H1 (cell line): ENCODE measurements at regions of chr7 and their contacts with region 1.

Region 1: DNA sequence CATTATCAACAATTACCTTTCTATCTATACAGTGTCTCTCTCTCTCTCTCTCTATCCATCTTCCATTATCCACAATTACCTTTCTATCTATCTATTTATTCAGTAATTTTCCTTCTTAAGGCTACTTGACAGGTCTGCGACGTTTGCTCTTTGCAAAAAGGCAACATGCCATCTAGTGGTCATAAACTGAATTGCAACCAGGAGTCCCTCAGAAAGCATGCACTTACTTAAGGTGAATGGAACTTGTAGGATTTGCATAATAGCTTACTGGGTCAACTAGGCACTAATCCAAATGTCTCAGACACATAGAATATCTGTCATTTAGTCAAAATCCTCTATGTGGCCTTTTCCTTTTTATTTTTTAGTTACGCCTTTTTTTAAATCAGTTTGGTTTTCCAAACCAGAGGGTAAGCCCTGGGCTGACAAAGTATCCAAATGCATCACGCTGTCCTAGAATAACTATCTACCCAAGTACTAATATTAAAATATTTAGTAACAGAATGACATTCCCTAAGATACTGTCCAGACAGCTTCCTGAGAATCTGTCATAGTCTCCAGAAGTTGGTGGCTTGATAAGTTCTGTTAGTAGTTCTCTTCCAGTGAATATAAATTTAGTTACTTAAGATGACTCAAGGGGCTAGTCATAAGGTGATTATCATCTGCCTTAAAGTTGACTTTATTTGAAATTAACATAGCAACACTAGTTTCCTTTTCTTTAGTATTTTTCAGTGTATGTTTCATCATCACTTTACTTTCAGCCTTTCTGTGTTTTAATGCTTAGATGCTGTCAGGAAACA is 208.3 kb downstream of the PPP1R3A start:
- DNase-seq: peak in 1 of 2 experiments; percentile 59
- H3K4me3 ChIP-seq: no peak overlapping the region
- H3K27ac ChIP-seq: no peak overlapping the region
- H3K4me1 ChIP-seq: no peaks in the 10 kb centered on the region
- H3K27me3 ChIP-seq: no peaks in the 10 kb centered on the region
- CTCF ChIP-seq: peak in 2 of 3 experiments; percentile 68 to 84; a peak in 3 of 4 replicates
- EP300 ChIP-seq: no peak
- POLR2A ChIP-seq: no peak
- RAD21 ChIP-seq: peak; percentile 75 to 77

Region 2: GRCh38 chr7:113698556-113699220 is 11.8 kb before region 1 on chr7:
- CTCF ChIA-PET with region 1: interaction called, 13 read pairs
- POLR2A ChIA-PET with region 1: no interaction called
- DNase-seq: no peak
- H3K4me3 ChIP-seq: no peak overlapping the region
- H3K27ac ChIP-seq: no peak overlapping the region
- H3K4me1 ChIP-seq: no peaks in the 10 kb centered on the region
- H3K27me3 ChIP-seq: no peaks in the 10 kb centered on the region
- CTCF ChIP-seq: peak in 2 of 3 experiments; percentile 44 to 66; a peak in 2 of 4 replicates
- EP300 ChIP-seq: no peak
- POLR2A ChIP-seq: no peak
- RAD21 ChIP-seq: peak; percentile 76 to 77